ENCODE measurements at regions of chr15 and their contacts with region 1.

Region 1: DNA sequence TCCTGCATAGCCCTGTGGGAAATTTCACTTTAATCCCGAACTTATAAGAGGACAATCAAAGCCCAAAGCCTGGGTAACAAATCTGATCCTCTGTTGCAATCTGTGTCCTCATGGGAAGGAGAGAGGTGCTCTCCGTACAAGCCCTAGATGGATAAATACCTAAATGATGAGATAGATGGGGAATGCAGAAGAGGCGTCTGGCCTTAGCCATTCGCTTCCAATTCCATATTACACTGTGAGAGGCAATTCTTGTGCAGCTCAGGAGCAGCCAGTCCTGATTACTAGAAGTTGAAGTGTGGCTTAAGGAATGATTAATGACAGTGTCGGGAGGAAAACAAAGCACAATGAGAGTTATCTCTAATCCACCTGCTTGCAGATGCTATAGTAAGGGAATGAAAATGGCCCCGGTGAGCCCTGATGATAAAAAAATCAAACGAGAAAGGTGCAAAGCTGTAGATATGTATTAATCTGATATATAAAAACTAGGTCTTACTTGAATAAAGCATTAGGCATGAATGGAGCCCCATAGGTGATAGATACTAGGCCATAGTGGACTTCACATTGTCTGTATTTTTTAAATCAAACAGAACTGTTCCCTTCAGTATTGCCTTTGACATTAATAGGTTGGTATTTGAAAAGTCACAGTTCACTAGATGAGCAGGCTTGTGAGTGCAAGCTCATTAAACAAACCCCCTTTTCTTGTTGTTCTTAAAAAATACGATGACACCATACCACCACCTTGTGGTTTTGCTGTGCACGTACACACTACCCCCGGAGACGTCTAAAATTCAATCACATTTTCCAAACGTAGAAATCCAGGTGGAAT is 54.2 kb upstream of the TMCO5A start:
- DNase-seq: peak; percentile 63
- H3K4me3 ChIP-seq: no peak overlapping the region
- CTCF ChIP-seq: peak; percentile 61

Region 2: GRCh38 chr15:37134699-37135131 is 745.5 kb before region 1 on chr15:
- CTCF ChIA-PET with region 1: interaction called, 53 read pairs
- POLR2A ChIA-PET with region 1: no interaction called
- DNase-seq: no peak
- H3K4me3 ChIP-seq: no peak overlapping the region
- CTCF ChIP-seq: peak; percentile 37

Region 3: GRCh38 chr15:37289109-37289765 is 591.0 kb before region 1 on chr15:
- CTCF ChIA-PET with region 1: interaction called, 22 read pairs
- POLR2A ChIA-PET with region 1: no interaction called
- DNase-seq: no peak
- H3K4me3 ChIP-seq: no peak overlapping the region
- CTCF ChIP-seq: peak; percentile 70

Region 4: DNA sequence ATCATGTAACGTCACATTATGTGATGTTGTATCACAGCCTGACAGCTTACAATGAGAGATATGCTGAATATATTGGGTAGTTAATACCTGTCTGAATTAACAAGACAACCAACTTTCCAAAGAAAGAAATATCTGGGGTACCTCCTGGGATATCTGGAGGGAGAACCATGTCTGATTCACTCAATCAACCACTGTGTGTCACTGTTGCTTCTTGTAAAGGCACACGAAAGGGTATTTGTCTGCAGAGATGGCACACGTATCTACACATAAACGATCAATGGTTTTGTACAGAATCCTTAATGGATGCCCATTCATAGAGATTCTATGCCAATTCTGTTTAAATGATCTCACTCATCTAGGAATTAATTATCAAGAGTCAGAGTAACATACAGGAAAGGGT is 197.9 kb before region 1 on chr15:
- CTCF ChIA-PET with region 1: interaction called, 33 read pairs
- POLR2A ChIA-PET with region 1: no interaction called
- DNase-seq: no peak
- H3K4me3 ChIP-seq: no peak overlapping the region
- CTCF ChIP-seq: peak; percentile 13

Region 5: DNA sequence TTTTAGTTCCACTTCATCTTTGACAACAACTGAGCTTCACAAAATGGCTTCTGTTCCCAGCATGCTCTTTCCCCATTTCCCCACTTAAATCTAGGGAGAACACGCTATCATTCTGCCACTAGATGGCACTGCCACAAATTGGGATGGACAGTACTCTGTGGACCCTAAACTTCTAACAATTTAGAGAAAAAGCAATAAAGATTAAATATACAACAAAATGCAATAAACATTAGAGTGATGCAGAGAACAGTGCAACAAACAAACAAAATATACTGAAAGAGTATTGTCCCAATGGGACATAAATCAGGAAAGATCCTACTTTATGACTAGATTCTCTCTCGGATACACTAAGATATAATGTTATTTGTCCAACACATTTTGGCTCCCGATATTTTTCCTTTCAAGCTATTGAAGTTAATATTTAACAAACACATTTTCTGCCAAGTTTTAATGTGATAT is 115.5 kb before region 1 on chr15:
- CTCF ChIA-PET with region 1: interaction called, 54 read pairs
- POLR2A ChIA-PET with region 1: no interaction called
- DNase-seq: no peak
- H3K4me3 ChIP-seq: no peak overlapping the region
- CTCF ChIP-seq: peak; percentile 52

Region 6: GRCh38 chr15:37891766-37892368 is 11.6 kb after region 1 on chr15:
- CTCF ChIA-PET with region 1: interaction called, 82 read pairs
- POLR2A ChIA-PET with region 1: no interaction called
- DNase-seq: no peak
- H3K4me3 ChIP-seq: no peak overlapping the region
- CTCF ChIP-seq: peak; percentile 81

Measured in AG04449 (cell line).